ENCODE measurements at regions of chr17 and their contacts with region 1.

Region 1: DNA sequence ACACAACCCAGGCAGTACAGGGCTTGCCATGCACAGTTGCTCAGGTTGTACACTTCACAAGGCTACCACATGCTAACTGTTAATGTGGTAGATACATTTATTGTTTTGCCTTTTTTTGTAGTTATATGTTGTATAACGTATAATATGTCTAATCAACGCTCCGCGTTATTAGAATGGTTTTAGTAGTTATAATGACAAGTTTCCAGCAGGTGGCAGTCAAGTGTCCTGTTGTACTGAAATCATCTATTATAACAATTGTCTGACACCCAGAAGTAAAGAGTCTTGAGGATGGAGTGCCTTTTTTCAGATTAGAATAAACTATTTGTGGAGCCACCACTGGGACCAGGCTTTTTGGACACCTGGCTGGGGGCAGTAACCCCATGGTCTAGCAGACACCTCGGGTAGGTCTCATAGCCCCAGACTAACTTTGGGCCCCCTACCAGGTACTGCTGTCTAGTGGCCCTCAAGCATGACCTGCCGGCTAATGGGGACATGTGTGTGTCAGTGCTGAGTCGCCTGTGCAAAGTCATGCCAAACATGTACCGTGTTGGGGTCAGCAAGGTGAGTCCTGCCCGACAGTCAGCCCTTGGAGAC is 32.8 kb downstream of the MYO15A start:
- DNase-seq: peak in 2 of 7 donors; percentile 44 to 49
- H3K4me3 ChIP-seq: no peak overlapping the region
- H3K27ac ChIP-seq: no peak overlapping the region
- H3K4me1 ChIP-seq: no peaks in the 10 kb centered on the region
- H3K27me3 ChIP-seq: no peaks in the 10 kb centered on the region
- CTCF ChIP-seq: peak; percentile 39 to 70 (median 64)
- POLR2A ChIP-seq: no peak

Region 2: DNA sequence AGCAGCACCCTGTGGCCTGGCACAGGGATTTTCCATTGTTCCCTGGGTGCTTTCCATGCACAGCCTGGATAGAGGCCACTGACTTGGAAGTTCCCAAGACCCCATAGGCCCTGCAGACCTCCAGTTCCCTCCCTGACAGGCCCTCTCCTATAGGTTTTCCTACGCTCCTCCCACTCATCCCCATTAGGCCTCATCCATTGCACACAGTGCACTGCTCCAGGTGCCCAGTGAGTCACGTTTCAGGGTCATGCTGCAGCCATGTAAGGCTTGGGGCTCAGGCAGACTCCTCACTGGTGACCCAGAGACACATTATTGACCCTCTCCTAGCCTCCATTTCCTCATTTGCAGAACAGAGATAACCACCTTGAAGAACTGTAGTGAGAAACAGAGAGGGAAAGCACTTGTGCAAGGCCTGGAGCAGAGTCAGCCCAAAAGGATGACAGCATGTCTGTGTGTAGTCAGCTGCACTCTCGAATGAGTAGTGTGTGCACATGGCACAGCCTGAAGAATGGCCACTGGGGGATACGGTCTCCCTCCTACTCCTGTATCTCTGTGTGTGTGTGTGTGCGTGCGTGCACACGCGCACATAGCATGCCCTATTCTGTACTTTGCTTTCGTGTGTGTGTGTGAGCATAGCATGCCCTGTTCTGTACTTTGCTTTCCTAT is 141.8 kb before region 1 on chr17:
- intact Hi-C with region 1: no loop called
- DNase-seq: no peak
- H3K4me3 ChIP-seq: no peak overlapping the region
- H3K27ac ChIP-seq: no peak overlapping the region
- H3K4me1 ChIP-seq: peaks cover 0 to 3% of the 10 kb centered on the region in 2 donors
- H3K27me3 ChIP-seq: no peaks in the 10 kb centered on the region
- CTCF ChIP-seq: no peak
- POLR2A ChIP-seq: no peak

Region 3: GRCh38 chr17:18056212-18056611 is 85.1 kb before region 1 on chr17:
- intact Hi-C with region 1: no loop called
- DNase-seq: no peak
- H3K4me3 ChIP-seq: no peak overlapping the region
- H3K27ac ChIP-seq: no peak overlapping the region
- H3K4me1 ChIP-seq: no peaks in the 10 kb centered on the region
- H3K27me3 ChIP-seq: no peaks in the 10 kb centered on the region
- CTCF ChIP-seq: no peak
- POLR2A ChIP-seq: no peak

Region 4: DNA sequence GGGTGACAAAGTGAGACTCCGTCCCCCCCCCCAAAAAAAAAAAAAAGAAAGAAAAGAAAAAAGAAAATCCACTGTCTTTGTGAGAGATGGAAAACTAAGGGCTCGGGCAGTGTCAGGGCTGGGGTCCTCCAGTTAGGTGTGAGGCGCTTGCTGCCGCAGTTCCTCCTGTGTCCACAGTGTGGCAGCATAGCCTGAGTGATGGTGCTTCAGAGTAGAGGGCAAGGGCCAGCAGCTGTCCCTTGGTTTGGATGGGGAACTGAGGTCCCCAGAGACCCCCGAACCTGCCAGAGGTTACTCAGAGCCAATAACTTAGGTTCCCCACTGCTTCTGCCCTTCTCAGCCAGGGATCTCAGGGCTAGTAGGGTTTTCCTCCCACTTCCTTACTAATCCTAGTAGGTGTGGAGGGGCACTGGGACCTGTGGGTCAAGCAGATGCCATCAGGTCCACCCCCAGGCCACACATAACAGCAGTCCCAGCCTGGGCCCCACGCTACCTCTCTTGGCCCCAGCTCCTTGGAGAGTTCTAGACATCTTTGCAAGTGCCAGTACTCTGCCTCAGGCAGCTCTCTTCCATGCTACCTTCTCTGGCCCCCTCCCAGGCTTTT is 76.2 kb after region 1 on chr17:
- intact Hi-C with region 1: loop called in 1 of 2 experiments (anchors 5 kb)
- DNase-seq: peak; percentile 66 to 91 (median 78)
- H3K4me3 ChIP-seq: no peak overlapping the region
- H3K27ac ChIP-seq: no peak overlapping the region
- H3K4me1 ChIP-seq: peaks cover 8 to 10% of the 10 kb centered on the region in 2 donors
- H3K27me3 ChIP-seq: no peaks in the 10 kb centered on the region
- CTCF ChIP-seq: peak; percentile 84 to 92 (median 90)
- POLR2A ChIP-seq: no peak